ENCODE measurements at regions of chr17 and their contacts with region 1.

Region 1: DNA sequence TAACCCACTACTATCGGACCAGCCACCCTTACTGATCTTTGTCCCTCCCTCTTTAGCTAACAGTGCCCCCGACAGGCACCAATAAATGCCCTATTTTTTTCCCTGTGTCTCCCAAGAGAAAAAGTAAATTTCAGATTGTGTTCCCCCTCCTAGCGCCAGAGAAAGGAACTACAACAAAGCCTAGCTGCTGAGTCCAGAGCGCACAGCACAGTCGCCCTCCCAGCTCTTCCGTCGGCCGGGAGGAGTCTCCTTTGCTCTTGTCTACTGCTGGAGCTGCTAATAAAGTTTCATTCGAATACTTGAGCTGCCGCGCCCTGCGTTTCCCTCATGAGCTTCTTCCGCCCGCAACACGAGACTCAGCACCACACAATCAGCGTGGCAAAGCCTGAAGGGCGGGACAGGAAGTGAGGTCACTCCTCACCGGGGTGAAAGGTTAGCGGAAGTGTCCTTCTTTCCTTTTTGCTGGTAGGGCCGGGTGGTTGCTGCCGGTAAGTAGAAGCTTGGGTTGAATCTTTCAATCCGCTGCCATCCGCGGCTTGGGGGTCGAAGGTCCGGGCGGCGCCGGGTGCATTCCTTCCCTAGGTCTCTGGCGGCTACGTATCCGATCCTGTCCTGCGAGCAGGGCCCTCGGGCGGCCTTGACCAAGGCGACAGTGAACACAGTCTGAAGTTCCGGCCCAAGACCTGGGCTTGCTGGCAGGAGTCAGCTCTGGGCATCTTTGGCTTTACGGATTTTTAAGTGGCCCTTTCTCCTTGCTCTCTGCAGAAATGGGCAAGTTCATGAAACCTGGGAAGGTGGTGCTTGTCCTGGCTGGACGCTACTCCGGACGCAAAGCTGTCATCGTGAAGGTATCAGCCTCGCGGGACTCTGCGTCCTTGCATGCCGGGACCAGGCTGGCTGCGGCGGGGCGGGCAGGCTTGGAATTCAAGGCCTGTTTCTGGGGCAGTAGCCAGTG is at the start of gene RPL27:
- DNase-seq: peak; percentile 93 to 99
- H3K4me3 ChIP-seq: peak within 1 kb of the TSS; percentile 83 to 100 (median 91)
- H3K27ac ChIP-seq: peak within 1 kb of the TSS; percentile 84
- H3K4me1 ChIP-seq: peaks cover 3 to 12% (median 4%) of the 10 kb centered on the region in 4 experiments; a peak in 6 of 7 replicates
- H3K27me3 ChIP-seq: no peaks in the 10 kb centered on the region
- CTCF ChIP-seq: peak; percentile 44 to 79 (median 70)
- EP300 ChIP-seq: peak in 1 of 2 experiments; percentile 68; a peak in 1 of 3 replicates
- POLR2A ChIP-seq: peak; percentile 71 to 98
- RAD21 ChIP-seq: peak; percentile 55 to 62
- total RNA-seq, gene RPL27: 1,415 and 1,425 TPM in 2 replicates

Region 2: DNA sequence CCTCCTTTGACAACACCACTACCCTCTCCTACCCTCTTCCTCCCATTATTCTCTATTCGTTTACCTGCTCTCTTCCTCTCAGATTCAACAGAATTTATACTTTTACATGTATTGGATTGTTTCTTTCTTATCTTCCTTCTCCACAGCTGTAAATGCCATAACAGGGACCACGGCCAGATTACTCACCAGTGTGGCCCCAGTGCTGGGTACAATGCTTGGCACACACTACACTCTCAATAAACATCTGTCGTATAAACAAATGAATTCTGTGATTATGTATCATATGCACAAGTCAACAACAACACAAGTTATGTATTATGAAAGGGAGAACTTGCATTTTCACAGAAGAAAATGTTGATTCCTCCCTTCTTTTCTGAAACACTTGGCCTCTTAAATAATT is 54.0 kb before region 1 on chr17:
- CTCF ChIA-PET with region 1: no interaction called
- POLR2A ChIA-PET with region 1: interaction called, 11 read pairs
- DNase-seq: no peak
- H3K4me3 ChIP-seq: no peak overlapping the region
- H3K27ac ChIP-seq: no peak overlapping the region
- H3K4me1 ChIP-seq: no peaks in the 10 kb centered on the region
- H3K27me3 ChIP-seq: no peaks in the 10 kb centered on the region
- CTCF ChIP-seq: no peak
- EP300 ChIP-seq: no peak
- POLR2A ChIP-seq: no peak
- RAD21 ChIP-seq: no peak

Region 3: GRCh38 chr17:42975265-42975664 is 23.0 kb before region 1 on chr17:
- CTCF ChIA-PET with region 1: interaction called, 20 read pairs
- POLR2A ChIA-PET with region 1: interaction called, 45 read pairs
- DNase-seq: no peak
- H3K4me3 ChIP-seq: no peak overlapping the region
- H3K27ac ChIP-seq: no peak overlapping the region
- H3K4me1 ChIP-seq: peaks cover 0 to 8% (median 3%) of the 10 kb centered on the region in 4 experiments; a peak in 4 of 7 replicates
- H3K27me3 ChIP-seq: no peaks in the 10 kb centered on the region
- CTCF ChIP-seq: no peak
- EP300 ChIP-seq: no peak
- POLR2A ChIP-seq: no peak
- RAD21 ChIP-seq: no peak

Region 4: GRCh38 chr17:43015579-43015978 is 17.3 kb after region 1 on chr17:
- CTCF ChIA-PET with region 1: interaction called, 6 read pairs
- POLR2A ChIA-PET with region 1: interaction called, 123 read pairs
- DNase-seq: no peak
- H3K4me3 ChIP-seq: no peak overlapping the region
- H3K27ac ChIP-seq: peak overlapping the region; percentile 21; the same call in 1 of the 2 replicates
- H3K4me1 ChIP-seq: peaks cover 6 to 18% (median 12%) of the 10 kb centered on the region in 4 experiments
- H3K27me3 ChIP-seq: no peaks in the 10 kb centered on the region
- CTCF ChIP-seq: no peak
- EP300 ChIP-seq: no peak
- POLR2A ChIP-seq: no peak
- RAD21 ChIP-seq: no peak

Region 5: DNA sequence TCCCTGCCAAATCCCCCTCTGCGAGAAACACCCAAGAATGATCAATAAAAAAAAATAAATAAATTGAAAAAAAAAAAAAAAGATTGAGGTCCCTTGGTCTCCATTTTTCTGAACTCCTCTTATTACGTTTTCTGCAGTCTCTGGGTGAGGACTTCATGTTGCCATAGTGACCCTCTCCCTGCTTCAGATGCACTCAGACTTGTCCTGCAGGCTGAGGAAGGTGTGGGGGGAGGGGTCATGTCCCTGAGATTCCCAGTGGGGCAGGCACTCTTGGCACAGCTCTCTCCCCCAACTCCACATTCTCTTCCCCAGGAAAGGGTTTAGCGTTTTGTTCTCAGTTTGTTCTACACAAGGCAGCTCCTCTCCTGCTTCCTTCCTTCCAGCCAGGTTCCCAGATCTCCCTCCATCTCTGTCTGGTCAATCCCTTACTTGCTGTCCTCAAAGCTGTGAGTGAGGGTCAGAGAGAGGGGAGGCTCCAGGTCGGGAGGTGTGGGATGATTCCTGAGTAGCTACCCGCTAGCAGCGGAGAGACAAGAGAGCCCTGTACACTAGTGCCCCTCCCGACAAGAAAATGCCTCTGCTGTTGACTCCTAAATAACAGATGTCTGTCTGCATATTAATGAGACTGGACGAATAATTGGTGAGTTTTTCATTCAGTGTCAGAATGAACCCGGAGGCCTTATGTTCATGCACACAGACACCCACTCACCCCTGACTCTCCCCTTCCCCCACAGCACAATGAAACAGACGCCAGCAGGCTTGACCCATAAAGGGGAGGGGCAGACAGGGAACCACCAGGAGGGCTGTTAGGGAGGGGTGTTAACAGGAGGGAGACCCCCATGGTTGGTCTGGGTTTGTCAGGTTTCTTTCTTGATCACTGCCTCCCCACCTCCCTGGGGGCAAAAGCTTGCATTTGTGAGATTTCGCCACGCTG is 36.0 kb after region 1 on chr17:
- CTCF ChIA-PET with region 1: interaction called, 5 read pairs
- POLR2A ChIA-PET with region 1: interaction called, 21 read pairs
- DNase-seq: no peak
- H3K4me3 ChIP-seq: peak overlapping the region in 3 of 4 experiments; percentile 6 to 48 (median 14); a peak in 4 of 8 replicates
- H3K27ac ChIP-seq: peak overlapping the region; percentile 64
- H3K4me1 ChIP-seq: peaks cover 14 to 30% (median 25%) of the 10 kb centered on the region in 4 experiments
- H3K27me3 ChIP-seq: no peaks in the 10 kb centered on the region
- CTCF ChIP-seq: no peak
- EP300 ChIP-seq: no peak
- POLR2A ChIP-seq: no peak
- RAD21 ChIP-seq: no peak

Region 6: DNA sequence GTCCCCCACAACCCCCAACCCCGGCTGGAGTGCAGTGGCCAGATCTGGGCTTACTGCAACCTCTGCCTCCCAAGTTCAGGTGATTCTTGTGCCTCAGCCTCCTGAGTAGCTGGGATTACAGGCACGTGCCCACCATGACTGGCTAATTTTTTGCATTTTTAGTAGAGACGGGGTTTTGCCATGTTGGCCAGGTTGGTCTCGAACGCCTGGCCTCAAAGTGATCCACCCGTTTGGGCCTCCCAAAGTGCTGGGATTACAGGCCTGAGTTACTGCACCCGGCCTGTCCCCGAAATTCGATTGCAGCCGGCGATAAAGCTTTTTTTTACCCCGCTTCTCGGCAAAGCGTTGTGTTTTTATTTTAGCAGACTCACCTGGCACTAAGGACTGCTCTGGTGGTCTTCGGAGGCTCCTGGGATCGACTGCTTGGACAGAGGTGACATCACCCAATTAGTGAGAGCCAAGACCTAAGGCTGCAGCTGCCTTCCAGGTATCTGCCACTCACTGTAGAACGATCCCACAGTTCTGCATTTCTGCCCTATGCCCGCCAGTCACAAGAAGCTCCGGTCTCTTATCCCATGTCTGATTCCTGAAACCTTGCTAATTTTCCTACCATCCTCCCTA is 318.4 kb after region 1 on chr17:
- CTCF ChIA-PET with region 1: no interaction called
- POLR2A ChIA-PET with region 1: interaction called, 33 read pairs
- DNase-seq: no peak
- H3K4me3 ChIP-seq: no peak overlapping the region
- H3K27ac ChIP-seq: no peak overlapping the region
- H3K4me1 ChIP-seq: no peaks in the 10 kb centered on the region; a peak in 1 of 7 replicates
- H3K27me3 ChIP-seq: no peaks in the 10 kb centered on the region
- CTCF ChIP-seq: no peak
- EP300 ChIP-seq: no peak
- POLR2A ChIP-seq: no peak
- RAD21 ChIP-seq: no peak

Region 7: GRCh38 chr17:43515656-43516055 is 517.4 kb after region 1 on chr17:
- CTCF ChIA-PET with region 1: no interaction called
- POLR2A ChIA-PET with region 1: no interaction called
- DNase-seq: no peak
- H3K4me3 ChIP-seq: no peak overlapping the region
- H3K27ac ChIP-seq: no peak overlapping the region
- H3K4me1 ChIP-seq: no peaks in the 10 kb centered on the region
- H3K27me3 ChIP-seq: no peaks in the 10 kb centered on the region
- CTCF ChIP-seq: no peak
- EP300 ChIP-seq: no peak
- POLR2A ChIP-seq: no peak
- RAD21 ChIP-seq: no peak